ENCODE measurements at regions of chr15 and their contacts with region 1.

Region 1: DNA sequence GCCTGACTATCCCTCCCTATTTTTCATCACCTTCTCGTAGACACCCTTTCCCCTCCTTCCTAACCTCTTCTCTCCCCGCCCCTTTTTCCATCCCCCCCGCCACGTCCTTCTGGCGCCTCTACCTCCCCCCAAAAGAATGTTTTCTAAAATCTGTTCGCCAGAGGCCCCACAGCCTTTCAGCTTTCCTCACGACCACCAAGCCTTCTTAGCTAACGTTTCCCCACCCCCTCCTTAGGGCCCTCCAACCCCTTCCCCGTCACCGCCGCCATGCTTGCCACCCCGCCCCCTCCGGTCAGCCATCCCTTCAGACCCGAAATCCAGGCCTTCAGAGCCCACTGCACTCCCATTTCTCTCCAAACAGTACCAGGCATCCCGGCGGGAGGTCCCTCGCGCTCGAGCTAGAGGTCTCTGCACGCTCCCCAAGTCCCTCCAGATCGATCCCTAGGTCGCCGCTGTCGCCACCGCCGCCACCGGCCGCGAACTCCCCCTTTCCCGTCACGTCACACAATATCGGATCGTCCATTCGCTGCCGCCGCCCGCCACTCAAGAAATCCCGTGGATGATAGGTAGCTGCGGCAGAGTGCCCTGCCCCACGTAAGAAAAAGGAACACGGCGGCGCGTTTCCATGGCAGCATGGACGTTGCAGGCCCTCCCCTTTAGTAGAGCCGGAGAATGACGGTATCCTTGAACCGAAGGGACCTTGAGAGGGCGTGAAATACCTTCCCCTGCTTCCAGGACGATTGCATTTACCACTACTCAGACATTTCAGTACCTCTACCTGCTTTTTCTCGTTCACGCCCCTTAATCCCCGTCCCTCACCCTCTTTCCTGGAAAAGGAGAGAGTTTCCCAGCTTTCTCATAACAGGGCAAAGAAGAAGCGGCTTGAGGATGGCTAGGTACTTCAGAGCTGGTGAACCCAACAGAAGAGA is at the start of gene TP53BP1:
- DNase-seq: peak; percentile 93 to 99
- H3K4me3 ChIP-seq: peak within 1 kb of the TSS; percentile 76 to 92
- H3K27ac ChIP-seq: peak within 1 kb of the TSS; percentile 73 to 85
- H3K4me1 ChIP-seq: peaks cover 0 to 17% of the 10 kb centered on the region in 2 donors
- H3K27me3 ChIP-seq: no peaks in the 10 kb centered on the region
- CTCF ChIP-seq: no peak
- total RNA-seq, gene TP53BP1: 34.6 TPM

Region 2: DNA sequence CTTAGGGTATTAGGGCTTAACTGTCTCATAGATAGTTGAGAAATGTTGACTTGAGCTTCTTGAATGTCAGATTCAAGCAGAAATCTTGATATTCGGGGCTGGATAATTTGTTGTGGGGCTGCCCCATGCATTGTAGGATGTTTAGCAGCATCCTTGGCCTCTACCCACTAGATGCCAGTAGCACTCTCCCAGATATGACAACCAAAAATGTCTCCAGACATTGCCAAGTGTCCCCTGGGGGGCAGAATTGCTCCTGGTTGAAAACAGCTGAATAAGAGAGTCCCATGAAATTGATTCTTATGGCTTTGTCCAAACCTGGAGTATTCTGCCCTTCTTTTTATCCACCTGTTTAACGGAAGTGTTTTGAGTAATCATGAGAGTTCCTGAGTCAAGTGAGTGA is 146.6 kb before region 1 on chr15:
- intact Hi-C with region 1: no loop called
- DNase-seq: no peak
- H3K4me3 ChIP-seq: no peak overlapping the region
- H3K27ac ChIP-seq: no peak overlapping the region
- H3K4me1 ChIP-seq: no peaks in the 10 kb centered on the region
- H3K27me3 ChIP-seq: no peaks in the 10 kb centered on the region
- CTCF ChIP-seq: peak in 1 of 3 experiments; percentile 8

Region 3: DNA sequence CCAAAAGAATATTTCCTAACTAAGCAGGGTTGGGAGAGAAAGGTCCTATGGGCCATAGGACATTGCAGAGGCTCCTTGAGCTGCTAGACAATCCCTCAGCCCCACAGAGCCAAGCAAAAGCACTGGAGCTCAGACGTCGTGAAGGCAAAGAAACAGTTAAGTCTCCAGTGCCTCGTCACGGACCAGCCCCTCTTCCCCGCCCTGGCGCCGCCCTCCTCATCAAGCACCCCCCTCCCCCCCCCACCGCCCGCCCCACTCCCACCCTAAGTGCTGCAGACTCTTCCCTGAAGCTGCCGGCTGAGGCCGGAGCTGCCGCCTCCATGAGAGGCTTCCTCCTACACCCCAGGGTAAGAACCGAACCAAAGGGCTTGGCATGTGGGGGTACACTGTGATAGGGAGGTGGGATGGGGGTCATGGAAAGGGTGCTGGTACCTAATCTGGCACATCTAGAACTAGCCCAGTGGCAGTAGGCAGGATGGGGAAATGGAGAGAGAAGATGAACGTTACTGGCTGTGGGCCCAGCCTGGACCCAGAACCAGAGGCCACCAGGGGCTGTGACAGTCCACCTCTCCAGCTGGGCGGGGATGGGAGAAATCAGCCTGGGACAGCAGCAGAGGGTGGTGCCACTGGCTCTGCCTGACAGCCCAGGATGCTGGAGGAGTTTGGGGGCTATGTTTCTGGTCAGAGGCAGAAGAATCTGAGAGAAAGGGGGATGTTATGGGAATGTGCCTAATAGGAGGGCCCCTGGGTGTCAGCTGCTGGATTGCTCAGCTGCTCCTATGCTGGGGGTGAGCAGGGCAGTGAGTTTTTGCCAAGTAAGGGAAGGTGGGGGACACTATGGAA is 24.6 kb after region 1 on chr15 and contains the start of gene MAP1A:
- intact Hi-C with region 1: loop called (anchors 2 kb)
- DNase-seq: peak in 1 of 2 donors; percentile 78
- H3K4me3 ChIP-seq: peak within 1 kb of the TSS; percentile 55 to 75
- H3K27ac ChIP-seq: peak within 1 kb of the TSS; percentile 80 to 81
- H3K4me1 ChIP-seq: peaks cover 5 to 17% of the 10 kb centered on the region in 2 donors
- H3K27me3 ChIP-seq: no peaks in the 10 kb centered on the region
- CTCF ChIP-seq: no peak
- total RNA-seq, gene MAP1A: 19.9 TPM

Measured in ascending aorta (tissue), 2 donors.